ENCODE measurements at regions of chr21 and their contacts with region 1.

Region 1: GRCh38 chr21:28884976-28885852 is 107.5 kb downstream of the LTN1 start:
- DNase-seq: peak; percentile 87 to 94 (median 92)
- ATAC-seq: peak; percentile 99 to 100 (median 99)
- H3K4me3 ChIP-seq: peak overlapping the region; percentile 34 to 82 (median 62)
- H3K27ac ChIP-seq: peak overlapping the region; percentile 77 to 96 (median 92)
- H3K4me1 ChIP-seq: peaks cover 0 to 18% (median 11%) of the 10 kb centered on the region in 12 donors
- H3K27me3 ChIP-seq: no peaks in the 10 kb centered on the region
- CTCF ChIP-seq: no peak
- POLR2A ChIP-seq: peak in 1 of 2 donors; percentile 75

Region 2: GRCh38 chr21:28754127-28754611 is 131.0 kb before region 1 on chr21:
- intact Hi-C with region 1: loop called in 3 of 10 experiments (anchors 1 to 10 kb)
- DNase-seq: peak; percentile 55 to 87 (median 84)
- ATAC-seq: peak; percentile 98
- H3K4me3 ChIP-seq: peak overlapping the region in 2 of 12 donors; percentile 19 to 23
- H3K27ac ChIP-seq: peak overlapping the region; percentile 81 to 94 (median 89)
- H3K4me1 ChIP-seq: peaks cover 9 to 59% (median 29%) of the 10 kb centered on the region in 12 donors
- H3K27me3 ChIP-seq: no peaks in the 10 kb centered on the region
- CTCF ChIP-seq: no peak
- POLR2A ChIP-seq: peak in 1 of 2 donors; percentile 52

Region 3: DNA sequence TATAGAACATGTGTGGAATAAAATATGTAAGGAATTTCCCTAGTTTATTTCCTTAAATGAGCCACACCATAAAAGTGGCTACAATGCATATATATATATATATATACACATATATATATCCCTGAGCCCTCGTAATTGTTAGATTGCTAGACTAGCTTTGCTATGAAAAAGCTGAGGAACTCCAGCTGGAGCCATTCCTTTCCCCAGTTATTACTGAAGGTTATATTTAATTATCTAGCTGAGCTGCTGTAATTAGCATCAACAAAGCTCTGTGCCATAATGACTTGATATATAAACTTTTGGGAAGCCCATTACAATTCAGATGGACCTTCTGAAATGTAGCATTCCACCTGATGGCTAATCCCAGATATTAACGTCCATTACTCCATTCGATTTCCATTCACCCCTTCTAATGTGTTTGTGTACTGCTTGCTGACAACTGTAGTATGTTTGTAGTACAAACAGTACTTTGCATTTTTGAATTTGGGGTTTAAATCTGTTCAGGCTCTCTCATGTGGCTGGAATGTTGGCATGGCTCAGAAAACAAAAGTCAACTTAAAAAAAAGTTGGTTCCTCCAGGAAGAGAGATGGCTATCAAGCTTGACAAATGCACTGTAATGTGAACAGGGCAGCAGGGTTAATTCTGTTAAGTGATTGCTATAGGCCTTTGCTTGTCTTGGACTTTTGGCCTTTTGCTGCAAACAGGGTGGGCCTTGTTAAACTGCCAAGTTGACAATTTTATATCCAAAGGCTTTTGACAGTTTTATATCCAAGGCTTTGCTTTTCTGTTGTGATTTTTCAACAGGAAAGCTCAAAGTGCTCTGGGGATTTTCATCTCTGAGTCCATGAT is 62.5 kb before region 1 on chr21:
- intact Hi-C with region 1: loop called in 1 of 10 experiments (anchors 5 kb)
- DNase-seq: no peak
- ATAC-seq: peak; percentile 49 to 72 (median 62)
- H3K4me3 ChIP-seq: no peak overlapping the region
- H3K27ac ChIP-seq: peak overlapping the region in 7 of 12 donors; percentile 2 to 65 (median 29)
- H3K4me1 ChIP-seq: peaks cover 3 to 30% (median 22%) of the 10 kb centered on the region in 12 donors
- H3K27me3 ChIP-seq: no peaks in the 10 kb centered on the region
- CTCF ChIP-seq: no peak
- POLR2A ChIP-seq: no peak

Region 4: DNA sequence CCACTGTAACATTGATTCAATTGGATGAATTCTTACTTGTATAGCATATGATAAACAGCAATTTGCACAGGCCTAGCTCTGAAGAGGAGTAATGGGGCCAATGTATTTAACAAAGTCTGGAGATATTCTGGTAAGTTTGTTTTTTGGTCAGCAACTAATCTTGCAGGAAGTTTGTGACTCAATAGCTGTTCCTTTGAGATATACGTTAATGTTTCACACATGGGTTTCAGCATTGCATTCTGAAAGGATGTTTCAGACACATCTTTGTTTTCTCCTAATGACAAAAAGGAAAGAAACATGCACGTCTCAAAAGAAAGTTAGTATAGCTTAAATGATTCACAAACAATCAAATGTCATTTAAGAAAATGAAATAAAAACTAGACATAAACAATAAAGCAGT is 58.4 kb after region 1 on chr21:
- intact Hi-C with region 1: no loop called
- DNase-seq: no peak
- ATAC-seq: no peak
- H3K4me3 ChIP-seq: no peak overlapping the region
- H3K27ac ChIP-seq: no peak overlapping the region
- H3K4me1 ChIP-seq: peaks cover 0 to 8% (median 0%) of the 10 kb centered on the region in 12 donors
- H3K27me3 ChIP-seq: no peaks in the 10 kb centered on the region
- CTCF ChIP-seq: no peak
- POLR2A ChIP-seq: no peak

Region 5: DNA sequence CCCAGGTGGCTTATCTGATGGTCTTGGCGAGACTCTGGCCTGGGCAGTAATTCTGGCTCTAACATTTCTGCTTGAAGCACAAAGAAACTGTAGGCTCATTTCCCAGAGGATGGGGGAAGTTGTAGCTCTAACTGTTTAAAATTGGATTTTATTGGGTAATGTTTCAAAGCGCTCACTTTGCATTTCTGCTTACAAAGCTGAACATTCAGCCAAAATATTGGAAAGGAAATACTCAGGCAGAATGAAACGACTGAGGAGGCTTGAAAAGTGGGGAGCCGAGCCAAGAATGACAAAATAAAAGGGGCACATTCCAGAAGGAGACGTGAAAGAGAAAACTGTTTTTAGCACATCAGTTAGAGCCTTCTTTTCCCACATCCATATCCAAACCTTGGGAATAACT is 852.0 kb after region 1 on chr21:
- intact Hi-C with region 1: no loop called
- DNase-seq: no peak
- ATAC-seq: no peak
- H3K4me3 ChIP-seq: no peak overlapping the region
- H3K27ac ChIP-seq: no peak overlapping the region
- H3K4me1 ChIP-seq: peaks cover 0 to 6% (median 0%) of the 10 kb centered on the region in 12 donors
- H3K27me3 ChIP-seq: no peaks in the 10 kb centered on the region
- CTCF ChIP-seq: no peak
- POLR2A ChIP-seq: no peak

Measured in heart left ventricle (tissue), 16 donors.